T-cell (primary cell): ENCODE measurements at regions of chr2 and their contacts with region 1.

Region 1: GRCh38 chr2:197239434-197239833 is 71.1 kb downstream of the ANKRD44 start:
- DNase-seq: peak in 1 of 35 experiments; percentile 53
- ATAC-seq: peak in 3 of 4 experiments; percentile 27 to 33 (median 30)
- H3K4me3 ChIP-seq: peak overlapping the region; percentile 23 to 53
- H3K4me3 Mint-ChIP-seq: peak overlapping the region; percentile 74 to 80 (median 78)
- H3K27ac ChIP-seq: peak overlapping the region; percentile 95
- H3K27ac Mint-ChIP-seq: peak overlapping the region; percentile 93 to 98
- H3K4me1 ChIP-seq: peaks cover 68 to 85% of the 10 kb centered on the region in 2 experiments
- H3K4me1 Mint-ChIP-seq: peaks cover 86 to 90% (median 88%) of the 10 kb centered on the region in 3 donors
- H3K27me3 ChIP-seq: no peaks in the 10 kb centered on the region
- H3K27me3 Mint-ChIP-seq: no peaks in the 10 kb centered on the region

Region 2: GRCh38 chr2:197261808-197262226 is 22.4 kb after region 1 on chr2:
- CTCF ChIA-PET with region 1: interaction called in 1 of 2 experiments, 4 read pairs
- POLR2A ChIA-PET with region 1: interaction called, 5 to 19 read pairs
- DNase-seq: peak in 1 of 35 experiments; percentile 47
- ATAC-seq: peak; percentile 45 to 51 (median 48)
- H3K4me3 ChIP-seq: no peak overlapping the region
- H3K4me3 Mint-ChIP-seq: peak overlapping the region; percentile 26 to 61 (median 35)
- H3K27ac ChIP-seq: peak overlapping the region; percentile 88
- H3K27ac Mint-ChIP-seq: peak overlapping the region; percentile 87 to 91
- H3K4me1 ChIP-seq: peaks cover 61 to 72% of the 10 kb centered on the region in 2 experiments
- H3K4me1 Mint-ChIP-seq: peaks cover 82 to 85% (median 84%) of the 10 kb centered on the region in 3 donors
- H3K27me3 ChIP-seq: no peaks in the 10 kb centered on the region
- H3K27me3 Mint-ChIP-seq: no peaks in the 10 kb centered on the region

Region 3: DNA sequence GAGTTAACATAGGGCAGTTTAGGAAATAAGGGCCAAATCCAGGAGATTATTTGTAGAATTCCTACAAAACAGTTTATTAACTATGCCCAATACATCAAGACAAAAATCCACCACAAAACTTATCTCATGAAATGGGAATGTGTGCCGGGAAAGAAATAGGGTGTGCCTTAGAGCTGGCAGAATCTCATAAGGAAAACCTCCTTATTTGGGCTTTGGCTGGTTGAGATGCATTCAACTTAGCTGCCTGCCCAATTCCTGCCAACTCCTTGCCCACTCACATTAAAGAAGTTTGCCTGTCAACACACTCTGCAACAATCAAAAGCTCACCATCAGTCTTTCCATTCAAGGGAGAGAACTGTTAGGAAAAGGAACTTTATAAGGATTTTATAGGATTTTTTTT is 1717.7 kb after region 1 on chr2:
- CTCF ChIA-PET with region 1: no interaction called
- POLR2A ChIA-PET with region 1: no interaction called
- DNase-seq: no peak
- ATAC-seq: no peak
- H3K4me3 ChIP-seq: no peak overlapping the region
- H3K4me3 Mint-ChIP-seq: no peak overlapping the region
- H3K27ac ChIP-seq: no peak overlapping the region
- H3K27ac Mint-ChIP-seq: no peak overlapping the region
- H3K4me1 ChIP-seq: no peaks in the 10 kb centered on the region
- H3K4me1 Mint-ChIP-seq: no peaks in the 10 kb centered on the region
- H3K27me3 ChIP-seq: no peaks in the 10 kb centered on the region
- H3K27me3 Mint-ChIP-seq: no peaks in the 10 kb centered on the region